Uterus (tissue), 4 donors: ENCODE measurements at regions of chr6 and their contacts with region 1.

Region 1: GRCh38 chr6:41787219-41787917 is at the start of gene TOMM6:
- DNase-seq: peak; percentile 94 to 97
- H3K4me3 ChIP-seq: peak within 1 kb of the TSS; percentile 82
- H3K27ac ChIP-seq: peak within 1 kb of the TSS; percentile 84 to 97
- H3K4me1 ChIP-seq: peaks cover 0 to 12% of the 10 kb centered on the region in 2 donors
- H3K27me3 ChIP-seq: no peaks in the 10 kb centered on the region
- CTCF ChIP-seq: peak; percentile 82 to 96 (median 90)
- POLR2A ChIP-seq: peak; percentile 68 to 84
- total RNA-seq, gene TOMM6: 53.1 to 164 (median 96.0) TPM

Region 2: DNA sequence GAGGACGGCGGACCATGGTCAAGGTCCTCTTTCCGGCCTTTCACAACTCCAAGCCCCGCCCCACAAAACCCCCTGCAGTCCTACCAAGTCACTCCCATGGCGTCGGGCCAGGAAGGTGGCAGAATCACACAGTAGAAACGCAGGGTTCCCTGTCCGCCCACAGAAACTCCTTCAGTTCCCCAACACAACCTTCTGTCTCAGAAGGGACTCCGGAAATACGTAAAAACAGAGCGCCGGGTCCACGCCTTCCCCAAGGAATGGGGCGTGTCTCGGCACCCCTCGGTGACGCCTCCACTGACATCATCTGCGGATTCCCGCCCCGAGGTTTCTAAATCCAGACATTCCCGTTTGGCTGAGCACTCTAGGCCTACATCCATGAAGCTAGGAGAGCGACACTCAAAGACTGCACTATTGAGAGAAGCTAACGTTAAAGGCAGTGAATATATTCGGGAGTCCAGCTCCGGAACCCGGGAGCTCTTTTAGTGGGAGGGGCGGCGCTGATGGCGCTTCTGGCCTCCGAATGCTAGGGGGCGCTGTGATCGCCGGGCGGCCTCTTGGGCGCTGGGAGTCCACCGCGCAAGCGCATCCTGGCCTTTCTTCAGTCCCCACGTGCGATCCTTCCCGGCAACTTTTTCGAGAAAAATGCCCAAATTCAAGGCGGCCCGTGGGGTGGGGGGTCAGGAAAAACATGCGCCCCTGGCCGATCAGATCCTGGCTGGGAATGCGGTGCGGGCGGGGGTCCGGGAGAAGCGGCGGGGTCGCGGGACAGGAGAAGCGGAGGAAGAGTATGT is 133.7 kb after region 1 on chr6 and contains the starts of genes BYSL and MED20:
- intact Hi-C with region 1: loop called (anchors 10 kb)
- DNase-seq: peak; percentile 92 to 94
- H3K4me3 ChIP-seq: peak within 1 kb of the TSS; percentile 65 to 89
- H3K27ac ChIP-seq: peak within 1 kb of the TSS; percentile 96 to 97
- H3K4me1 ChIP-seq: peaks cover 2 to 7% of the 10 kb centered on the region in 2 donors
- H3K27me3 ChIP-seq: no peaks in the 10 kb centered on the region
- CTCF ChIP-seq: peak; percentile 93 to 100 (median 96)
- POLR2A ChIP-seq: peak; percentile 30 to 48
- total RNA-seq, gene BYSL: 0.51 to 20.5 (median 18.0) TPM
- total RNA-seq, gene MED20: 1.0 to 36.8 (median 17.3) TPM